Sigmoid colon (tissue), 7 donors: ENCODE measurements at regions of chr21 and their contacts with region 1.

Region 1: GRCh38 chr21:36113647-36114428 is 21.0 kb upstream of the CBR3 start:
- DNase-seq: no peak
- H3K4me3 ChIP-seq: peak overlapping the region in 2 of 4 donors; percentile 43 to 47
- H3K27ac ChIP-seq: peak overlapping the region in 1 of 4 donors; percentile 22
- H3K4me1 ChIP-seq: peaks cover 0 to 12% (median 6%) of the 10 kb centered on the region in 4 donors
- H3K27me3 ChIP-seq: no peaks in the 10 kb centered on the region
- CTCF ChIP-seq: no peak
- EP300 ChIP-seq: no peak
- POLR2A ChIP-seq: no peak

Region 2: GRCh38 chr21:36060159-36060921 is 53.5 kb before region 1 on chr21 and contains the start of gene SETD4:
- intact Hi-C with region 1: loop called (anchors 2 kb)
- DNase-seq: peak; percentile 96
- H3K4me3 ChIP-seq: peak within 1 kb of the TSS; percentile 58 to 80 (median 71)
- H3K27ac ChIP-seq: peak within 1 kb of the TSS; percentile 87 to 94 (median 90)
- H3K4me1 ChIP-seq: peaks cover 0 to 21% (median 19%) of the 10 kb centered on the region in 4 donors
- H3K27me3 ChIP-seq: no peaks in the 10 kb centered on the region
- CTCF ChIP-seq: no peak
- EP300 ChIP-seq: no peak
- POLR2A ChIP-seq: peak; percentile 81 to 92
- total RNA-seq, gene SETD4: 14.3 to 19.9 (median 14.8) TPM

Region 3: GRCh38 chr21:36069713-36070573 is 43.9 kb before region 1 on chr21 and contains the start of gene CBR1:
- intact Hi-C with region 1: loop called (anchors 5 kb)
- DNase-seq: peak; percentile 98
- H3K4me3 ChIP-seq: peak within 1 kb of the TSS; percentile 66 to 91 (median 80)
- H3K27ac ChIP-seq: peak within 1 kb of the TSS; percentile 81 to 91 (median 89)
- H3K4me1 ChIP-seq: peaks cover 0 to 44% (median 37%) of the 10 kb centered on the region in 4 donors
- H3K27me3 ChIP-seq: no peaks in the 10 kb centered on the region
- CTCF ChIP-seq: no peak
- EP300 ChIP-seq: peak in 2 of 4 donors; percentile 20 to 38
- POLR2A ChIP-seq: peak; percentile 41 to 75
- total RNA-seq, gene CBR1: 102 to 264 (median 159) TPM

Region 4: DNA sequence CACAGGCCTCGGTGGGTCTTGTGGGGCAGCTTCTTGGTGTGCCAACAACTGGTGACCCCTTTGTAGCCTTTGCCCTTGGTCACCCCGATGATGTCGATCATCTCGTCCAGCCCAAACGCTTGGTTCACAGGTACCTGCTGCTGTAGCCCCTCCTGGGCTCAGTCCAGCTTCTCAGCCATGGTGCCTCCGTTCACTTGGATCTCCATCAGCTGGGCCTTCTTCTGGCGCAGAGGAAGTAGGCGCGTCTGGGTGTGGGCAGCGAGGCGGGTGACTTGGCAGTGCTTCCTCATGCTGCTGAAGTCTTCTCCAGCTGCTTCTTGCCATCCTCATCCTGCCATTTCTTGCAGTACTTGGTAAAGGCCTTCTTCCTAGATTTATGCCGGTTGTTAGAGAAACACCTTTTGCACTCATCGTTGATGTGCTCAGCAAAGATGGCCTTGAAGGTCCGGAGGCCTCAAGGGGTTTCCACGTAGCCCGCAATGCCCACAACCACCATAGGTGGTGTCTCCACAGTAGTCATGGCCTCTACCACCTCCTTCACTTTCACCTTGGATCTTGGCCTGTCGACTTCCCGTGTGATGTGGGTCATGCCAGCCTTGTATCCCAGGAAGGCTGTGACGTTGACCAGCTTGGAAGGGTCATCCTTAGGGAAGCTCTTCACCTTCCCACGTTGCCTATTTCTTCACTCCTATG is 55.7 kb after region 1 on chr21:
- intact Hi-C with region 1: no loop called
- DNase-seq: no peak
- H3K4me3 ChIP-seq: no peak overlapping the region
- H3K27ac ChIP-seq: no peak overlapping the region
- H3K4me1 ChIP-seq: no peaks in the 10 kb centered on the region
- H3K27me3 ChIP-seq: no peaks in the 10 kb centered on the region
- CTCF ChIP-seq: no peak
- EP300 ChIP-seq: no peak
- POLR2A ChIP-seq: no peak